ENCODE measurements at regions of chr1 and their contacts with region 1.

Region 1: DNA sequence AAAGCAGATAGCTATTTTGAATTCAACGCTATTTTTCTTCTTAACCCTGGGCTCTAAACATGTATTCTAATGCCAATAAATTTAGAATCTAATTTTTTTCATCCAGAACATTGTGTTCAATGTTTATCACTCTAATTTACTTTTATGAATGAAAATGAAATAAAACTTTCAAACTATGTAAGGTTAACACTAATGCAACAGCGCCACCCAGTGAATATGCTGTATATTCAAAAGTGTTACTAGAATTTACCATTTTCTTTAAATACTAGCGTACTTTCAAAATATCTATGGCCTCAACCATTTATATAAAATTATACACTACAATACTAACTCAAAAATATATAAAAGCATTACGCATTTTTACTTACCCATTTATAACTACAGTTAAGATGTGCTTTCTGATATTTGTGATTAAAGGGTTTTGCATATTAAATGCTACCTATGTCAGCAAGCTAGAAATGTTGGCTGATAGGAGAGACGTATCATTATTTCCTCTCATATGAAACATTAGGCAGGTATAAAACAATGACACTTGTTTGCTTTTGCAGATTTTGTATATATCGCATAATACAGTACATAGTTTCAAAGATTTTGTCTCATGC is 5.9 kb upstream of the NUF2 start:
- DNase-seq: peak in 1 of 4 donors; percentile 62
- ATAC-seq: no peak
- H3K4me3 ChIP-seq: no peak overlapping the region
- H3K27ac ChIP-seq: no peak overlapping the region
- H3K4me1 ChIP-seq: no peaks in the 10 kb centered on the region
- H3K27me3 ChIP-seq: no peaks in the 10 kb centered on the region
- CTCF ChIP-seq: peak; percentile 50 to 65

Region 2: DNA sequence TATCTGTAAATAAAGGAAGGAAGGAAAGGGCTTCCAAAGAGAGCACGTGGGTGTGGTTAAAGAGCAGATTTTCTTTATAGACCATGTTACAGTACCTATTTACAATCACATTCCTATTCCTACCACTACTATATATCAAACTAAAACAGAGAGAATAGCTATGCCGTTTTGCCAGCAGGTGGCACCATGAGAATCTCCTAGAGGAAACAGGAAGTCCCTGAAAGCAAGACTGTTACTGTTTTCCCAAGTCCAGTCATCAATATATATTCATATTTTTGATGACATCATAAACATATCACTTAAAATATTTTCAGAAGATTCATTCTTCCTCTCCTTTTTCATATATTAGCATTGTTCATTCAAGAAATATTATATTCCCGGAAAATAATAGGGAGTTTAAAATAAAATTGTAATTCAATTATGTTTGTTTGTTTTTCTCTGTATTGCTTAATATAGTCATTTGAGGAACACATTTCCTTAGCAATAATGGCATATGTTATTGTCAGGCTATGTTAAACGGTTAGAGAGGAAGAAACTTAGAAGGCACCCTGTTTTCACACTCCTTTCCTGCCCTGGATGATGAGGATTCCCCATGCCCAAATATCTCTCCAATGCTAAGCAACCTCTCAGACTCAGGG is 461.5 kb before region 1 on chr1:
- intact Hi-C with region 1: loop called in 1 of 2 experiments (anchors 5 kb)
- DNase-seq: peak in 3 of 4 donors; percentile 36 to 63 (median 52)
- ATAC-seq: peak; percentile 88
- H3K4me3 ChIP-seq: no peak overlapping the region
- H3K27ac ChIP-seq: no peak overlapping the region
- H3K4me1 ChIP-seq: no peaks in the 10 kb centered on the region
- H3K27me3 ChIP-seq: no peaks in the 10 kb centered on the region
- CTCF ChIP-seq: peak; percentile 58 to 59

Region 3: DNA sequence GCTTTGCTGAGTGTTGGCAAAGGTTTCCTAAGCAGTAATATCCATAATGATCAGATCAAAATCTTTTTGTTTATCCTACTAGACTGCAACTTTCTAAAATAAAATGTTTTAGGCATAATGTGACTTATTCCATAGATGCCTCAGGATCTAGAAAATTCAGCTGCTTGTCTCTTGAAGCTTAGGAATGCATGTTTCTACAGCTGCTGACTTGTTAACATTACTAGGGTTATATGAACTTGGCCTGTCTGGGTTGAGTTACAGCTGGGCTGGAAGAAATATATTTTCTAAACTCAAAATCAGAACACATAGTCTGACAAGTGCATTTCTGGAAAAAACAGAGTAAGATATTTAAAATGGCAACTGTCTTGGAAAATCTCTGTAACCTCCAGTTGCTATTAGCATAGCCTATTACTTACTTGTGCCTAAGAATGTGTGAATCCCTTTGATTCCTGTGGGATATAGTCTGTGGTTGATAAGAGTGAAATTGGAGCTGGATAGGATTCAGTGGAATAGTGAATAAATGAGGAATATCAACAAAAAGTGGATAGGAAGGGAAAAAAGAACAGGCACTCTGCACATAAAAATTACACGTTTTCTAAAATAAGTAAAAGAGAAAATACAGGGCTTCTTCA is 185.5 kb before region 1 on chr1:
- intact Hi-C with region 1: no loop called
- DNase-seq: no peak
- ATAC-seq: no peak
- H3K4me3 ChIP-seq: no peak overlapping the region
- H3K27ac ChIP-seq: no peak overlapping the region
- H3K4me1 ChIP-seq: no peaks in the 10 kb centered on the region
- H3K27me3 ChIP-seq: no peaks in the 10 kb centered on the region
- CTCF ChIP-seq: no peak

Measured in left lung (tissue), 14 donors.